ENCODE measurements at regions of chr11 and their contacts with region 1.

Region 1: DNA sequence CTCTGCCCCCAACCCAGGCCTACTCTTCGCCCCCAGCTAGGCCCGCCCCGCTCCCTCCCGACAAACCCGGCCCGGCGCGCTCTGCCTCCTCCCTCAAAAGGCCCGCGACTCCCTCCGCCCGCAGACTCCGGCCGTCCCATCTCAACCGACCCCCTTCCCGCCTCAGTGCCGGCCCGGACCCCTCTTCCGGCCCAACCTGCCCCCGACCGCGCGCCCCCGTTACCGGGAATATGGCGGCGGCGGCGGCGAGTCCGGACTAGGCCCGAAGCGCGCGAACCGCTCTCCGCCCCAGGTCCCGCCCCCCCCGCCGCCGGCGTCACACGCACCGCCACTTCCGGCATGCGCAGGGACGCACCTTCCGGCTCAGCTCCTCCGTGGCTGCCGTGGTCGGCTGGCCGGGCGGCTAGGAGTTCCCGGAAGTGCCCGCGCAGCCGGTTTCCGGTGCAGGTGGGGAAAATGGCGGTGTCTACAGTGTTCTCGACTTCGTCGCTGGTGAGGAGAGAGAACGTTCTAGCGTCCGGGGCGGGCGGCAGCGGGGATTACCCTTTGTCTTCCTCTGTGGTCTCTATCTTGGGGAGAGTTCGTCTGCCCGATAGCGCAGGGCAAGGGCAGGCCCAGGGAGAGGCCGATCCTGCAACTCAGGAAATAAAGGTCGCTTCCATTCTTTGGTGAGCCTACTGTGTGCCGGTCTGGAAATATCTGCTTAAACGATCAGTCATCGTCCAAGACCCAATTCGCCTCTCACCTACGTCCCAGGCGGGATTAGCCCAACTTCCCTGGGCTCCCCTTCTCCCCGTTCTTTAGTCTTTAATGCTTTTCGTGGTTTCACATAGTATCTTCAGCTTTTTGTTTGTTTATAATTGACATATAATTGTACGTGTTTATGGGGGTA is at the starts of genes CPSF7 and SDHAF2:
- DNase-seq: peak; percentile 99
- H3K4me3 Mint-ChIP-seq: peak within 1 kb of the TSS; percentile 88
- H3K27ac Mint-ChIP-seq: peak within 1 kb of the TSS; percentile 95
- H3K4me1 Mint-ChIP-seq: peaks cover 64% of the 10 kb centered on the region
- H3K27me3 Mint-ChIP-seq: no peaks in the 10 kb centered on the region
- total RNA-seq, gene CPSF7: 90.9 to 100 TPM
- total RNA-seq, gene SDHAF2: 31.4 to 35.4 TPM

Region 2: DNA sequence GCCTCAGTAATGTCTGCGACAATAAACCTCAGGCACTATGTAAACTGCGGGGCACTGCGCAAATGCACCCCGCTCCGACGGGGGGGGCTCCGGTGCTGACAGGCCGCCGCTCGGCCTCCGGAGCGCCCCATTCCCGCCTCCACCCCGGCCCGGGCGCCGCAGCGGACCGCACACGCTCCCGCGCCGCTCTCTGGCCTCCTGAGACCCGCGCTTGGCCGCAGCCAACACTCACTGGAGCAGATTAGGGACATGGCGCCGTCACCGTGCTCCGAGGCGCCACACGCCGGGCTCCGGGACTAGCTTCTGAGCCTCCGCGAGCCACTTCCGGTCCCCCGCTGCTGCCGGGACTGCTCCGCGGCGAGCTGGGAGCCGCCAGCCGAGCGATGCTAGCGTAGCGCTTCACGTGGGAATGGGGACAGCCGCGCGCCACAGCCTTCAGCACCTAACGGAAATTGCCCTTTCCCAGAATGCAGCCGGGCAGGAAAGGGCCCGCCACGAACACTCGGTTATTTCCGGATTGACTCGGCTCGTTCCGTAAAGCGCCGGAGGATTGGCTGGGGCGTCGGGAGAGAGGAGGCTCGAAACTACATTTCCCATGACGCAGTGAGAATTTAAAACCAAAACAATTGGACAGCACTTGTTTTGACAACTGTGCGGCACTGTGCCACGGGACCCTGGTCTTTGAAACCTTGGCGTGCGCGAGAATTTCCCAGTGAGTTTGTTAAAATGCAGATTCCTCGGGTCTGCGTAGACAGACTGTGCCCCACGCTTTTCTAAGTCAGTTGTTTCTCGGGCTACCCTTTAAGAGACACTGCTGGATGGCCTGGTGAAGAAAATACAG is 523.6 kb before region 1 on chr11 and contains the start of gene PRPF19:
- CTCF ChIA-PET with region 1: no interaction called
- POLR2A ChIA-PET with region 1: no interaction called
- intact Hi-C with region 1: loop called (anchors 5 kb)
- DNase-seq: peak; percentile 100
- H3K4me3 Mint-ChIP-seq: peak within 1 kb of the TSS; percentile 90
- H3K27ac Mint-ChIP-seq: peak within 1 kb of the TSS; percentile 94
- H3K4me1 Mint-ChIP-seq: peaks cover 36% of the 10 kb centered on the region
- H3K27me3 Mint-ChIP-seq: no peaks in the 10 kb centered on the region
- total RNA-seq, gene PRPF19: 127 to 139 TPM

Region 3: DNA sequence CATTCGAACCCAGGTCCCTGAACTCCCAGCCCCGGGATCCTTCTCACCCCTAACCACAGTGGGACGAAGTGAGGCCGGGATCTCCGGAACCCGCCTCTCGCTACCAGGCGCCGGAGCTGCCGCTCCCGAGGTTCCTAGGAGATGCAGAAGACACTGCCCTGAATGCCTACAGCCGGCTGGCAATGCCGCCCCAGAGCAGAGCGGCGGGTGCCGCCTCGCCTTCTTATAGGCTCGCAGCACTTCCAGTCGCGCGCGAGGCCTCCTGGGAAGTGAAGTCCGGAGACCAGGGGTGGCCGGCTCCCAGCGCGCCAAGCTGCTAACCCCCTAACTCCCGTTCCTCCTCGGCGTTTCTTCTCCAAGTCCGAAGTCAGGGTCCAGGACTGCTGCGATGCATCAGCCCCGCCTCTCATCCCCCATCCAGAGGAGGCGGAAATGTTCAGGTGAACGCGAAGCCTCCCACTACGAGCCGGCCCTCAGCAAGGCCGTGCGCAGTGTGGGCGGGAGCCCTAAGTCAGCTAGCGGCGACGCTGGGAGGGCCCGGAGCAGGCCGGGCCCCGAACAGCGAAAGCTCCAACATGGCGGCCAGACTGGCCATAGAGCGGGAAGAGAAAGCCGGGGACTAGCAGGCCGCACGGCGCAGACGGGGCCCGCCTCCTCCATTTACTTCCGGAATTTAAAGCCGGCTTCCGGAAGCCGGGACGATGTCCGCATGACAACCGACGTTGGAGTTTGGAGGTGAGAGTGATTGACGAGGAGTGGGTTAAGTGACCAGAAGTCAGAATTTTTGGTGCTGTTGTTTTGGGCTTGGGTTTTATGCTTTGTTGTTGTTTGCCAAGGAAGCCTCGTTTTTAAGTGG is 68.0 kb before region 1 on chr11 and contains the starts of genes CYB561A3 and TMEM138:
- CTCF ChIA-PET with region 1: interaction called, 10 read pairs
- POLR2A ChIA-PET with region 1: interaction called, 23 read pairs
- intact Hi-C with region 1: loop called (anchors 2 kb)
- DNase-seq: peak; percentile 95
- H3K4me3 Mint-ChIP-seq: peak within 1 kb of the TSS; percentile 100
- H3K27ac Mint-ChIP-seq: peak within 1 kb of the TSS; percentile 96
- H3K4me1 Mint-ChIP-seq: peaks cover 32% of the 10 kb centered on the region
- H3K27me3 Mint-ChIP-seq: no peaks in the 10 kb centered on the region
- total RNA-seq, gene CYB561A3: 32.3 to 32.9 TPM
- total RNA-seq, gene TMEM138: 33.7 to 34.6 TPM

Region 4: DNA sequence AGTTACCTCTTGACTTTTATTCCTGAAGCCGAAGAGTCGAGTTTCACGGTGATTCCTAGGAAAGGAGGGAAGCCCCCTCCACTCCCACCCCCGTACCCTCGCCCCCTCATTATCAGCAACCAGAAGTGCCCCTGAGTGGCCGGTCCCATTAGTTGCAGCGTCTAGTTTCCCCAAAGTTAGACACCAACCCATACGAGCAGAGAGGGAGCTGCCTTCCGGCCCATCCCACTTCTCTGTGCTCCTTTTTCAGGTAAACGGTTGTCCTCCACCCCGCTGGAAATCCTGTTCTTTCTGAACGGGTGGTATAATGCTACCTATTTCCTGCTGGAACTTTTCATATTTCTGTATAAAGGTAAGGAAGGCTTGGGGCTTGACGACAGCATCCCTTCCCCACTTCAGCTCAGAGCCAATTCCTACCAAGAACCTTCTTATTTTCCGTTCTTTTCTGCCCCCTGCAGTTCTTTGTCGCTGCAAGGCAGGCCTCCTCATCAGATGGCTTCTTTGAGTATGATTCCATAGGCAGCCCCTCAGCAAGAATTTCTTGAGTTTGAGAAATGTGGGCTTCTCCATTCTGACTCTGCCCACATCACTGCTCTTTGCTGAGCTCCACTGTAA is 36.8 kb before region 1 on chr11:
- CTCF ChIA-PET with region 1: interaction called, 12 read pairs
- POLR2A ChIA-PET with region 1: interaction called, 16 read pairs
- intact Hi-C with region 1: loop called (anchors 2 kb)
- DNase-seq: peak; percentile 25
- H3K4me3 Mint-ChIP-seq: peak overlapping the region; percentile 87
- H3K27ac Mint-ChIP-seq: peak overlapping the region; percentile 89
- H3K4me1 Mint-ChIP-seq: peaks cover 18% of the 10 kb centered on the region
- H3K27me3 Mint-ChIP-seq: no peaks in the 10 kb centered on the region

Region 5: GRCh38 chr11:61477727-61478148 is 47.8 kb after region 1 on chr11:
- CTCF ChIA-PET with region 1: interaction called, 11 read pairs
- POLR2A ChIA-PET with region 1: no interaction called
- intact Hi-C with region 1: no loop called
- DNase-seq: peak; percentile 59
- H3K4me3 Mint-ChIP-seq: no peak overlapping the region
- H3K27ac Mint-ChIP-seq: no peak overlapping the region
- H3K4me1 Mint-ChIP-seq: peaks cover 9% of the 10 kb centered on the region
- H3K27me3 Mint-ChIP-seq: peaks cover 1% of the 10 kb centered on the region

Region 6: GRCh38 chr11:61509043-61510029 is 79.4 kb after region 1 on chr11:
- CTCF ChIA-PET with region 1: interaction called, 10 read pairs
- POLR2A ChIA-PET with region 1: no interaction called
- intact Hi-C with region 1: no loop called
- DNase-seq: peak; percentile 84
- H3K4me3 Mint-ChIP-seq: peak overlapping the region; percentile 20
- H3K27ac Mint-ChIP-seq: no peak overlapping the region
- H3K4me1 Mint-ChIP-seq: peaks cover 8% of the 10 kb centered on the region
- H3K27me3 Mint-ChIP-seq: peaks cover 44% of the 10 kb centered on the region